ENCODE measurements at regions of chr14 and their contacts with region 1.

Region 1: GRCh38 chr14:32252030-32252670 is 49.1 kb upstream of the RNU6-8 start:
- DNase-seq: peak; percentile 34 to 61 (median 60)
- H3K4me3 ChIP-seq: no peak overlapping the region
- H3K4me3 Mint-ChIP-seq: no peak overlapping the region
- H3K27ac ChIP-seq: no peak overlapping the region
- H3K27ac Mint-ChIP-seq: no peak overlapping the region
- H3K4me1 ChIP-seq: no peaks in the 10 kb centered on the region
- H3K4me1 Mint-ChIP-seq: no peaks in the 10 kb centered on the region
- H3K27me3 ChIP-seq: no peaks in the 10 kb centered on the region
- H3K27me3 Mint-ChIP-seq: peaks cover 0 to 2% (median 0%) of the 10 kb centered on the region in 3 donors
- CTCF ChIP-seq: peak; percentile 85

Region 2: DNA sequence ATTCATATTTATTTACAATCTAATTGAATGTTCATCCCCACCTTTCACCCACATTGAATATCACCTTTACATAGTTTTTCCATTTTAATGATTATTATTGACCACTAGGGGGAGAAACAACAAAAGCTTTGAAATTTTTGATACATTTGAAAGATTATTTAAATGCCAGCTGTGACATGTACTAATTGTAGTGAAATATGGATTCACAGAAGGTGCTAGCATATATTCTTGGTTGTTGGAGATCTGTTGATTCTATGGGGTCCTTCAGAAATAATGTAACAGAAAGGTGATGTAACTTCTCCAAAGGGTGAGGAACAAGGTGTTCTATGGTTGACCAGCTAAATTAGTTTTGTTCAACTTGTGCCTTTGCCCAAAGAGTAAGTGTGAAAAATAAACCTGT is 741.9 kb before region 1 on chr14:
- intact Hi-C with region 1: loop called (anchors 5 to 10 kb)
- DNase-seq: peak in 1 of 3 donors; percentile 30
- H3K4me3 ChIP-seq: no peak overlapping the region
- H3K4me3 Mint-ChIP-seq: no peak overlapping the region
- H3K27ac ChIP-seq: no peak overlapping the region
- H3K27ac Mint-ChIP-seq: no peak overlapping the region
- H3K4me1 ChIP-seq: no peaks in the 10 kb centered on the region
- H3K4me1 Mint-ChIP-seq: no peaks in the 10 kb centered on the region
- H3K27me3 ChIP-seq: no peaks in the 10 kb centered on the region
- H3K27me3 Mint-ChIP-seq: peaks cover 3 to 12% (median 11%) of the 10 kb centered on the region in 3 donors
- CTCF ChIP-seq: peak; percentile 85

Region 3: GRCh38 chr14:31926123-31926522 is 326.0 kb before region 1 on chr14:
- intact Hi-C with region 1: loop called (anchors 5 kb)
- DNase-seq: peak; percentile 1 to 23 (median 13)
- H3K4me3 ChIP-seq: no peak overlapping the region
- H3K4me3 Mint-ChIP-seq: no peak overlapping the region
- H3K27ac ChIP-seq: no peak overlapping the region
- H3K27ac Mint-ChIP-seq: no peak overlapping the region
- H3K4me1 ChIP-seq: no peaks in the 10 kb centered on the region
- H3K4me1 Mint-ChIP-seq: no peaks in the 10 kb centered on the region
- H3K27me3 ChIP-seq: no peaks in the 10 kb centered on the region
- H3K27me3 Mint-ChIP-seq: peaks cover 2 to 4% (median 2%) of the 10 kb centered on the region in 3 donors
- CTCF ChIP-seq: peak; percentile 68

Region 4: DNA sequence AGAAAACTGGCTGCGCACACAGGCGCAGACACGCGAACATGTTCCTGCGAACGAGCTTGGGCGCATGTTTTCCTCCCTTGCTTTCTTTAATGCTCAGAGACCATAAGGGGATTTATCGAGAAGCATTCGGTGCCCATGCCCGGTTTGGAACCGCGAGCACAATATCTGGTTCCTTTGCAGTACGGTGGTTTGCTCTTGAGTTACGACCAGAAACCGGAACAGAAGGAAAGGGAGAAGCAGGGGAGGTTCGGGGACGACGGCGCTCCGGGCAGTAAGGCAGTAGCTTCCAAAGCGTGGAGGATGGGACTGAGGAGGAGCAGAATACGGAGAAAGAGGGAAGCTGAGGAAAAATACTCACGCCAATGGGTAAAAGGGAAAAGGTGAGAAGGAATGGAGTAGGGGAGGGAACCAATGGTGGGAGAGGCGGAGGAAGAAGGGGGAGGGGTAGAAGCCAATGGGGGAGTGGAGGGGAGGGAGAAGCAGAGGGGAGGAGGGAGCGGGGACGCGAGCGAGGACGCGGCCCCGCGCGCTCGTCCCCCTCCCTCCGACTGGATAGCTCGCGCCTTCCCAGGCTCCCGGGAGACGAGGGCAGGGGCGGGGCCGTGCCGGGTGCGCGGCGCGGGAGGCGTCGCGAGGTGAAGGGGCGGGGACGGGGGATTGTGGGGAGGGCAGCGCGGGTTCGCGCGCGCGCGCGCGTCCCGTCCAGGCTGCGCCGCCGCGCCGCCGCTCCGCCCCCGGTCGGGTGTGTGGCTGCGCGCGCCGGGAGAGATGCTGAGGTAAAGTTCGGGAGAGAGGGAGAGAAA is 175.7 kb before region 1 on chr14:
- intact Hi-C with region 1: loop called (anchors 2 to 5 kb)
- DNase-seq: peak; percentile 50 to 58 (median 55)
- H3K4me3 ChIP-seq: peak overlapping the region; percentile 79 to 99 (median 87)
- H3K4me3 Mint-ChIP-seq: peak overlapping the region; percentile 97 to 99
- H3K27ac ChIP-seq: peak overlapping the region; percentile 51 to 71
- H3K27ac Mint-ChIP-seq: peak overlapping the region; percentile 66 to 93 (median 86)
- H3K4me1 ChIP-seq: peaks cover 16 to 26% of the 10 kb centered on the region in 2 donors
- H3K4me1 Mint-ChIP-seq: peaks cover 27% of the 10 kb centered on the region
- H3K27me3 ChIP-seq: peaks cover 12 to 30% of the 10 kb centered on the region in 2 donors
- H3K27me3 Mint-ChIP-seq: peaks cover 8 to 34% (median 20%) of the 10 kb centered on the region in 3 donors
- CTCF ChIP-seq: no peak

Region 5: DNA sequence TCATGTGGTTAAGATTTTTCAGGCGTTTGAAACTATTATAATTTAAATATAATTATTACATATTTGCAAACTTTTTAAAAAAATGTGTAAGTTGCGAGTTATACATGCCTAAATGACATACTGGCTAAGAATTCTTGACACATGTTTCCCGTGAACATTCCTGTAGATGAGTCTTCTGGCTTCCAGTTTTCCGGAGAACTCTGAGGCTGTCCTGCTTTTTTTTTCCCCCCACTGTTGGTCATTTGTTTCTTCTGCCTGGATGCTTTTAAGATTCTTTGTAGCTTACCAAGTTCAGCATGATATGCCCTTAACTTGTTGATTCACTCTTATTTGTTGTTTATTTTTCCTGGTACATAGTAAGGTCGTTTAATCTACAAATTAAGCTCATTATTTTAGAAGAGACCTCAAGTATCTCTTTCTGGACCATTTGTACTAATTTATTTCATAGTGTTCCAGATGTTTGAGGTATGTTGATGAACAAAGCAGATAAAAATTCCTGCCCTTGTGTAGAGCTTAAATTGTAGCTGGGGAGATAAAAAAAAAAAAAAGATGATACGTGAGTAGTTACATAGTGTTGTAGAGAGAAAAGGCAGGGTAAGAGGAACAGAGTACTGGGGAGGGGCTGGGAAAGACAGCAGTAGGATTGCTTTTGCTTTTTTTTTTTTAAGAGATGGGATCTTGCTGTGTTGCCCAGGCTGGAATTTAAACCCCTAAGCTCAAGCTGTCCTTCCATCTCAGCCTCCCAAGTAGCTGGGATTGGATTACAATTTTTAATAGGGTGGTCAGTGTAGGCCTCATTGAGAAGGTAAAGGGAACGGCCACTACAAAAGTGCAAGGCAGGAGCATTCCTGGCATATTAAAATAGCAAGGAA is 142.2 kb before region 1 on chr14:
- intact Hi-C with region 1: no loop called
- DNase-seq: no peak
- H3K4me3 ChIP-seq: no peak overlapping the region
- H3K4me3 Mint-ChIP-seq: no peak overlapping the region
- H3K27ac ChIP-seq: no peak overlapping the region
- H3K27ac Mint-ChIP-seq: peak overlapping the region in 1 of 7 donors; percentile 28
- H3K4me1 ChIP-seq: no peaks in the 10 kb centered on the region
- H3K4me1 Mint-ChIP-seq: no peaks in the 10 kb centered on the region
- H3K27me3 ChIP-seq: no peaks in the 10 kb centered on the region
- H3K27me3 Mint-ChIP-seq: peaks cover 0 to 1% (median 0%) of the 10 kb centered on the region in 3 donors
- CTCF ChIP-seq: no peak

Measured in CD14-positive monocyte (primary cell).